B cell (primary cell): ENCODE measurements at regions of chr2 and their contacts with region 1.

Region 1: DNA sequence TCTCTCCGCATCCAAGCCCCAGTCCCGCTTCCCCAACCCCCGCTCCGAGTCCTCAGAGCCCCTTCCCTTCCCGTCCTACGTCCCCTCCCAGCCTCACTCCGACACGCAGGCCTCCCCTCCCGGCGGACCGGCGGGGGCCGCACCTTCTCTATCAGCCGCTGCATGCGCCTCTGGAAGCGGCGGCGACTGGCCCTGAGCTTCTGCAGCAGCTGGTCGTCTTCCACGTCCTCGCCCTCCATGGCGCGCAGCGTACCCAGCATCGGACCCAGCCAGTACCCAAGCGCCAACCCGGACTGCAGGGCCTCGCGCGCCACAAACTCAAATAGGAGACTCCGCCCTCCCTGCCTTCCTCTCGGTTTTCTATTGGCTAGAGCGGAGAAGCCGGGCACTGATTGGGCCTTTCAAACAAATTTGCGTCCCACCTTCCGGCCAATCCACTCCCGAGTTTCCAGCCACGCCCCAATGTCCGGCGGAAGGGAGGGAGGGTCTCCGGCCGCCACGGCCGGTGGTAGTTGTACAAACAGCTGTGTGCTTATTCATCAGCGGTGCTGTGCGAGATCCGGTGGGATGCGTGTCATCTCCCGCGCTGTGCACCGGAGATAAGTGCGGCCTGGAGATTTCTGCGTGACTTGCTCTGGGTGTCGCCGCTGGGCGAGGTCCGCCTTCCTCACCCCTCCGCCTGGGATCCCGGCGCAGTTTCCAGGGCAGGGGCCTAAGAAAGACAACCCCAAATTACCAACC is at the start of gene HJURP:
- DNase-seq: peak; percentile 92
- ATAC-seq: peak; percentile 98
- H3K4me3 ChIP-seq: peak within 1 kb of the TSS; percentile 60 to 85 (median 72)
- H3K4me3 Mint-ChIP-seq: peak within 1 kb of the TSS; percentile 87
- H3K27ac ChIP-seq: no peak within 1 kb of the TSS
- H3K27ac Mint-ChIP-seq: peak within 1 kb of the TSS; percentile 79
- H3K4me1 ChIP-seq: peaks cover 6 to 19% of the 10 kb centered on the region in 2 donors
- H3K4me1 Mint-ChIP-seq: peaks cover 20% of the 10 kb centered on the region
- H3K27me3 ChIP-seq: no peaks in the 10 kb centered on the region
- H3K27me3 Mint-ChIP-seq: peaks cover 7% of the 10 kb centered on the region
- CTCF ChIP-seq: no peak
- total RNA-seq, gene HJURP: 0.42 and 0.73 TPM in 2 replicates

Region 2: DNA sequence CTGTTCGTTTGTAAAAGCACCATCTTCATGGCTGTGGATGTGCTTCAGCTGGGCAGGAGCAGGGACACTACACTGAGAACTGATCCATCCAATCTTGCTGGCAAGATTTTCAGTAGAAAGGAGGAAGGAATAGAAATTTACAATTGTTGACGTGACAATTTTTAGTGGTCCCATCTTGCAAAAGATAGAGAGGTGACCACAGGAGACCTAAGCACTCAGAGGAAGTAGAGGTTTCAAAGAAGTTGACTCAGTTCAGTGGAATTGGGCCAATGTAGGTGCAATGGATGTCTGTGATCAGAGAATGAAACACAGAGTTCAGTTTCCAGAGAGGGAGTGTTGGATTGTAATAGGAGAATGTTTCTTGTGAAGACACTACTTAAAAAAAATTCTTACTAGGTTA is 140.3 kb before region 1 on chr2:
- CTCF ChIA-PET with region 1: no interaction called
- POLR2A ChIA-PET with region 1: no interaction called
- intact Hi-C with region 1: no loop called
- DNase-seq: no peak
- ATAC-seq: no peak
- H3K4me3 ChIP-seq: no peak overlapping the region
- H3K4me3 Mint-ChIP-seq: no peak overlapping the region
- H3K27ac ChIP-seq: no peak overlapping the region
- H3K27ac Mint-ChIP-seq: no peak overlapping the region
- H3K4me1 ChIP-seq: no peaks in the 10 kb centered on the region
- H3K4me1 Mint-ChIP-seq: peaks cover 3% of the 10 kb centered on the region
- H3K27me3 ChIP-seq: peaks cover 0 to 8% (median 0%) of the 10 kb centered on the region in 4 experiments
- H3K27me3 Mint-ChIP-seq: peaks cover 35% of the 10 kb centered on the region
- CTCF ChIP-seq: no peak

Region 3: GRCh38 chr2:233867993-233868532 is 13.7 kb after region 1 on chr2 and contains the start of gene MSL3B:
- CTCF ChIA-PET with region 1: interaction called, 3 read pairs
- POLR2A ChIA-PET with region 1: interaction called, 6 read pairs
- intact Hi-C with region 1: loop called (anchors 1 kb)
- DNase-seq: peak; percentile 80
- ATAC-seq: peak; percentile 78
- H3K4me3 ChIP-seq: peak within 1 kb of the TSS; percentile 58 to 82 (median 63)
- H3K4me3 Mint-ChIP-seq: peak within 1 kb of the TSS; percentile 94
- H3K27ac ChIP-seq: peak within 1 kb of the TSS; percentile 25 to 61
- H3K27ac Mint-ChIP-seq: peak within 1 kb of the TSS; percentile 85
- H3K4me1 ChIP-seq: peaks cover 0 to 6% of the 10 kb centered on the region in 2 donors
- H3K4me1 Mint-ChIP-seq: peaks cover 15% of the 10 kb centered on the region
- H3K27me3 ChIP-seq: peaks cover 0 to 4% (median under 1%) of the 10 kb centered on the region in 4 experiments
- H3K27me3 Mint-ChIP-seq: peaks cover 11% of the 10 kb centered on the region
- CTCF ChIP-seq: no peak